ENCODE measurements at regions of chr2 and their contacts with region 1.

Region 1: DNA sequence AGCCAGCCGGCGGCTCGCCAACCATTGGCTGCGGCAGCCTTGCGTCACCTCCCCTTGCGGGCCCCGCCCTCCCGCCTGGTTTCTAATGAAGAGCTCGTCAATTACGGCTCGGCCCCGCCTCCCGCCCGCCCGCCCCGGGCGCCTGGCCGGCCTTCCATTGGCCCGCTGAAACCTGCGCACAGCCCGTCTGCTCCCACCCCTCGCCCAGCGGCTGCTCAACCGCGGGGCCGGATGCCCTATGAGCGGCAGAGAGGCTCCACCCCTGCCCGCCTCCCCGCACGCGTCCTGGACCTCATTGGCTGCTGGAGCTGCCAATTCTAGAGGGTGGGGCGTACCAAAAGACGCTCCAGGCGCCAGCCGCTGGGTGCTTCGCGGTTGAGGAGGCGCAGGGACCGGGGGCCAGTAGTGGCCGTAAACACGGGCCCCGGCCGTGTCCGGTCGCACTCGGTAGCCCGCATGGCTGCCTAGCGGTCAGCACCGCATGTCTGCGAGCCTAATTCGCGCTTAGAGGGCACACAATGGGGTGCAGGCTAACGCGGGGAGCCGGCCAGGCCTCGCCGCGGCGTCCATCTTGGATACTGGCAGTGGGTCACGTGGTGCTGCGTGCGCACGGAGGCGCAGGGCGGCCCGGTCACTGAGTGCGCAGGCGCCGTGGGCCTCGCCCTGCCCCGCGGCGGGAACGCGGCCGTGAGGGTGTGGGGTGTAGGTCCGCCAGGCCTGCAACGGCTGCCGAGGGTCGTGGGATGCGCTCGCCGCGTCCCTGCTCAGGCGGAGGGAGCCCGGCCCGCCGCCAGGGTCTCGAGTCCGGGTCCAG is 454 bp upstream of the HDAC4 start:
- DNase-seq: peak; percentile 100
- H3K4me3 ChIP-seq: peak overlapping the region; percentile 56 to 80 (median 68)
- H3K27ac ChIP-seq: peak overlapping the region; percentile 97 to 100 (median 98)
- H3K4me1 ChIP-seq: peaks cover 4 to 40% (median 36%) of the 10 kb centered on the region in 4 donors
- H3K27me3 ChIP-seq: no peaks in the 10 kb centered on the region
- CTCF ChIP-seq: no peak
- EP300 ChIP-seq: peak in 2 of 4 donors; percentile 48 to 65
- POLR2A ChIP-seq: peak; percentile 90 to 93

Region 2: GRCh38 chr2:239114119-239114581 is 287.1 kb before region 1 on chr2:
- intact Hi-C with region 1: loop called (anchors 2 kb)
- DNase-seq: no peak
- H3K4me3 ChIP-seq: no peak overlapping the region
- H3K27ac ChIP-seq: peak overlapping the region; percentile 80 to 96 (median 88)
- H3K4me1 ChIP-seq: peaks cover 0 to 82% (median 55%) of the 10 kb centered on the region in 4 donors
- H3K27me3 ChIP-seq: no peaks in the 10 kb centered on the region
- CTCF ChIP-seq: no peak
- EP300 ChIP-seq: no peak
- POLR2A ChIP-seq: no peak

Region 3: GRCh38 chr2:239223310-239224198 is 177.7 kb before region 1 on chr2:
- intact Hi-C with region 1: loop called (anchors 5 kb)
- DNase-seq: peak; percentile 83
- H3K4me3 ChIP-seq: peak overlapping the region in 1 of 4 donors; percentile 12
- H3K27ac ChIP-seq: peak overlapping the region; percentile 80 to 91 (median 86)
- H3K4me1 ChIP-seq: peaks cover 0 to 88% (median 87%) of the 10 kb centered on the region in 4 donors
- H3K27me3 ChIP-seq: no peaks in the 10 kb centered on the region
- CTCF ChIP-seq: no peak
- EP300 ChIP-seq: no peak
- POLR2A ChIP-seq: no peak

Region 4: DNA sequence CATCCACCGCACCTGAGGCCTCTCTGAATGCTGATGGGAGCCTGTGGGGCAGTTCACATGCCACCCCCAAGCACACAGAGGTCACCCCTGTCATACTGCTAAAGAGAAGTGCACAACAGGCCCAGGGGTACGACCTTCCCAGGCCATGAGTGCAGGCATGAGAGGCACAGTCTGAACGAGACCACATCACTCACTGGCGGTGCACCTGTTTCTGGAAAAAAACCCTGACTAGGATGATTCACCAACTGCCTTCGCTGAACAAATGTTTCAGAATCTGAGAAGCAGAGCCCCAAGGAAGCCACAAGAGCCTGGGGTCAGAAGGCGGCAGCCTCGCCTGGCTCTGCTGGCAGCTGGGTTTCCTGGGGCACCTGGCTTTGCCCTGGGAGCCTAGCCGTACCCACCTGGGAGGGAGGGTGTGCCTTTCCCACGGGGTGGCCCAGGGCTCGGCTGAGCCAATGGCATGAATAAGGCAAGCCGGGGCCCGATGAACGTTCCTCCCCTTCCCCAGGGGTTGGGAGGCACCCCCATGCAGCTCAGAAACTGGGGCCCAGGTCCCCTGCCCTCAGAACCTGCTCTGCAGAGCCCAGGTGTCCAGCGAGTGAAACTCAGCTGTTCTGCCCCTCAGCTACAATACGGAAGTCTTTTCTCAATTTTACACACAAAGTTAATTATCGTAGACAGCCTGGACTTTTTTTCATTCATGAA is 74.3 kb before region 1 on chr2:
- intact Hi-C with region 1: loop called (anchors 1 kb)
- DNase-seq: peak; percentile 68
- H3K4me3 ChIP-seq: no peak overlapping the region
- H3K27ac ChIP-seq: peak overlapping the region; percentile 92 to 97 (median 96)
- H3K4me1 ChIP-seq: peaks cover 0 to 100% (median 91%) of the 10 kb centered on the region in 4 donors
- H3K27me3 ChIP-seq: no peaks in the 10 kb centered on the region
- CTCF ChIP-seq: no peak
- EP300 ChIP-seq: no peak
- POLR2A ChIP-seq: no peak

Region 5: DNA sequence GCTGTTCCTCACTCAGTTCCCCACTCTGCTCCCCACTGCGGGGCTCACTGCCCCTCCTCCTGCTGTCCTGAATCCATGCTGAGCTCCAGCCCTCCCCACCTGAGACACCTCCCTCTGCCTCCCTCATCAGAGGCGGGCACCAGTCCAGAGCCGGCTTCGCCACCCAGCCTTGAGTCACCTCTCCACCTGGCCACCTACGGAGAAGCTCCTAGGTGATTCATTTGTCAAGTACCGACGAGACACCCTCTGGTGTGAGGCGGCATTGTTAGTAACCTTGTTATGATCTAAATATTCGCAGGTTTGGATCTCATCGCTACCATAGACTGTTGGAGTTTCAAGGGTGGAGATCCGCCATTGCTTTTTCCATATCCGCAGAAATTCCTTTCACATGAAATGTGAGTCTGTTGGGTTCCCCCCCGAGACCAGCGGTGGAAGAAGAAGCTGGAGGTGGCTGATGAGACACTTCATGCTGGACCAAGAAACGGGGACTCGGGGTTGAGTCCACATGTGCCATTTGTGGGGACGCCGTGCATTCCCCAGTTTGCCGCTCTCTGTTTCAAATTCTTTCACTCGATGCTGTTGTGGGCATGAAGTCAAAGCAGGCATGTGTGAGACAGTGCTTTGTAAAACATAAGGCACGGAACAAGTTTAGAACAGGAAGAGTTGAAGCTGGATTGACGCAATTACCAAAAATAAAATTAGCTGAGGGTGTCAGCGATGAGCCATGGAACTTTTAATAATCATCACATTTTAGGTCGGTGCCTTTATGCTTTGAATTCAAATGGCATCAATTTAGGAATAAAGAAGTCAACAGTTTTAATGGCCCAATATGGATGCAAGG is 259.3 kb after region 1 on chr2:
- intact Hi-C with region 1: no loop called
- DNase-seq: peak; percentile 49
- H3K4me3 ChIP-seq: no peak overlapping the region
- H3K27ac ChIP-seq: no peak overlapping the region
- H3K4me1 ChIP-seq: peaks cover 0 to 11% (median 7%) of the 10 kb centered on the region in 4 donors
- H3K27me3 ChIP-seq: peaks cover 0 to 25% (median 16%) of the 10 kb centered on the region in 3 donors
- CTCF ChIP-seq: no peak
- EP300 ChIP-seq: no peak
- POLR2A ChIP-seq: no peak

Region 6: GRCh38 chr2:239814116-239814860 is 413.0 kb after region 1 on chr2:
- intact Hi-C with region 1: loop called (anchors 10 kb)
- DNase-seq: peak; percentile 80
- H3K4me3 ChIP-seq: peak overlapping the region in 1 of 4 donors; percentile 3
- H3K27ac ChIP-seq: peak overlapping the region; percentile 89 to 97 (median 92)
- H3K4me1 ChIP-seq: peaks cover 0 to 48% (median 40%) of the 10 kb centered on the region in 4 donors
- H3K27me3 ChIP-seq: no peaks in the 10 kb centered on the region
- CTCF ChIP-seq: no peak
- EP300 ChIP-seq: peak; percentile 11 to 83 (median 46)
- POLR2A ChIP-seq: no peak

Region 7: DNA sequence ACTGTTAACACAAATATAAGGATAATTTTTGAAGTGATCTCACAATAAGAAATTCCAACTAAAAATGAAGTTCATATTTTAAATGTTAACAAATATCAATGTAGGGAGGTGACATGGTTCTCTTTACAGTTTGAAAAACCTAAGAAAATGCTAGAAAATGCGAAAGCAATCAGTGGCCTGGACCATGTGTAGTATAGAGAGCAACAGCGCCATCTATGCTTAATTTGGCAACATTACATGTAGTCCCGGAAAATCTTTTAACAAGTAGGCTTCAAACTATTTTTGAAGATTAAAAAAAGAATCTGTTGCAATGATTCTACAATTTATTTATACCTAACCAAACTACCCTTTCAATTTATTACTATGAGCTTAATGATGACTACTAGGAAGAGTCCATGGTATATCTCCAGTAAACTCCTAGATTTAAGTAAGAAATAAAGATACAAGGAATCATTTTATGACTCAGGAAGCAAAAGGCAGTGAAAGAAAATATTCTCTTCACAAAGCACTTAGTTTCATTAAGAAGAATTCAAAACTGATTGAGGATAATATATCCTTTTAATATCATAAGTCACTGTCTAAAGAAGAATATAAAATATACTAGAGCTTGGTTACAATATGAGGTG is 590.5 kb after region 1 on chr2:
- intact Hi-C with region 1: loop called (anchors 10 kb)
- DNase-seq: no peak
- H3K4me3 ChIP-seq: peak overlapping the region in 1 of 4 donors; percentile 3
- H3K27ac ChIP-seq: peak overlapping the region; percentile 60 to 80 (median 71)
- H3K4me1 ChIP-seq: peaks cover 0 to 21% (median 16%) of the 10 kb centered on the region in 4 donors
- H3K27me3 ChIP-seq: no peaks in the 10 kb centered on the region
- CTCF ChIP-seq: peak; percentile 69 to 82 (median 77)
- EP300 ChIP-seq: no peak
- POLR2A ChIP-seq: no peak

Measured in sigmoid colon (tissue), 7 donors.